ENCODE measurements at regions of chr6 and their contacts with region 1.

Region 1: DNA sequence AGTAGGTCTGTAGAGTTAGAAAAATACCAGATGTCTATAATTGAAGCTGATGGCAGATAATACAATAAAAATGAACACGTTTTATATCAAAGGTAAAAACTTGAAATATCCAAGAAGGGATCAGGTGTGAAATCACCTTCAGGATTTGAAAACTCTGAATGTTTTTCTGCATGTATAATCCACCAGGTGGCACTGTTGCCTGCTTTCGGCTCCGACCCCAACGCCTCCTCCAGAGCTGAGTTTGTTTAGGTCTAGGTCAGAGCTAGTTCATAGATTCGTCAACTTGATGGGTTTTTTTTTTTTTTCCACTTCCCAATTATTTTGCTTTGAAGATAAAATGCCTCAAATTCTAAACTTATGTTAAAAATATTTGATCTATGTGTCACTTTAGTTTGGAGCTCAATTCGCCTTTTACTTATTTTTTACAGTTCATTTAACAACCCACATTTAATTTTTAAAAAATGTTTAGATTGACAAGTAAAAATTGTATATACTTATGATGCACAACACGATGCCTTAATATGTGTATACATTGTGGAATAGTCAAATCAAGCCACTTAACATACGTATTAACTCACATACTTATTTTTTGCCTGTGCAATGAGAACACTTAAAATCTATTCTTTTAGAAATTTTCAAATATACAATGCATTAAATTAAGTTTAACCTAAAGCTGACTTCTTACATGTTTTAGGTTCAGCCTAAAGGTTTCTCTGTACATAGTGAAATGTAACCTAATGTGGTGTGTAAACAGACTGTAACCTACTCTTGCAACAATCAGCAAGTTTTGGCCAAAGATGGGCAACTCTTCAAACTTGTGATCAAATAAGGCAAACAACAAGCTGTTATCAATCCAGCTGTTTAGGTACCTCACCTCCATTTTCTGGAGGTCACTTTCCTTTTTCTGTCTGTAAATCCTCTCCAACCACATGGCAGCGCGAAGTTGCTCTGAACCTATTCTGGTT is 39.4 kb upstream of the ENPP4 start:
- DNase-seq: peak; percentile 55 to 80
- ATAC-seq: peak; percentile 74
- H3K4me3 ChIP-seq: no peak overlapping the region
- H3K27ac ChIP-seq: no peak overlapping the region
- H3K4me1 ChIP-seq: no peaks in the 10 kb centered on the region
- H3K27me3 ChIP-seq: no peaks in the 10 kb centered on the region

Region 2: DNA sequence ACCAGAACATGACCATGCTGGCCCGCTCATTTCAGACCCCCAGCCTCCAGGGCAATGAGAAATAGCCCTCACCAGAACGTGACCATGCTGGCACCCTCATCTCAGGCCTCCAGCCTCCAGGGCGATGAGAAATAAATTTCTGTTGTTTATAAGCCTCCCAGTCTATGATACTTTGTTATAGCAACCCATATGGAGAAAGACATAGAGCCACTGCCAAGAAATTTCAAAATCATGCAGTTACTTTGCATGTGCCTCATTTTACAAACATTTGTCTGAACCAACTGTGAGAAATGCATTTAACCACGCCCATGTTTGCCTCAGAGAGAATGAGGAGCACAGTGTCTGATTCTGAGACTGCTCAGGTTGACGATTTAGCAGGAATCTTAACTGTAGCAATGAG is 546.7 kb after region 1 on chr6:
- intact Hi-C with region 1: loop called in 1 of 2 experiments (anchors 10 kb)
- DNase-seq: no peak
- ATAC-seq: no peak
- H3K4me3 ChIP-seq: no peak overlapping the region
- H3K27ac ChIP-seq: no peak overlapping the region
- H3K4me1 ChIP-seq: no peaks in the 10 kb centered on the region
- H3K27me3 ChIP-seq: no peaks in the 10 kb centered on the region